PC-3 (cell line): ENCODE measurements at regions of chr12 and their contacts with region 1.

Region 1: DNA sequence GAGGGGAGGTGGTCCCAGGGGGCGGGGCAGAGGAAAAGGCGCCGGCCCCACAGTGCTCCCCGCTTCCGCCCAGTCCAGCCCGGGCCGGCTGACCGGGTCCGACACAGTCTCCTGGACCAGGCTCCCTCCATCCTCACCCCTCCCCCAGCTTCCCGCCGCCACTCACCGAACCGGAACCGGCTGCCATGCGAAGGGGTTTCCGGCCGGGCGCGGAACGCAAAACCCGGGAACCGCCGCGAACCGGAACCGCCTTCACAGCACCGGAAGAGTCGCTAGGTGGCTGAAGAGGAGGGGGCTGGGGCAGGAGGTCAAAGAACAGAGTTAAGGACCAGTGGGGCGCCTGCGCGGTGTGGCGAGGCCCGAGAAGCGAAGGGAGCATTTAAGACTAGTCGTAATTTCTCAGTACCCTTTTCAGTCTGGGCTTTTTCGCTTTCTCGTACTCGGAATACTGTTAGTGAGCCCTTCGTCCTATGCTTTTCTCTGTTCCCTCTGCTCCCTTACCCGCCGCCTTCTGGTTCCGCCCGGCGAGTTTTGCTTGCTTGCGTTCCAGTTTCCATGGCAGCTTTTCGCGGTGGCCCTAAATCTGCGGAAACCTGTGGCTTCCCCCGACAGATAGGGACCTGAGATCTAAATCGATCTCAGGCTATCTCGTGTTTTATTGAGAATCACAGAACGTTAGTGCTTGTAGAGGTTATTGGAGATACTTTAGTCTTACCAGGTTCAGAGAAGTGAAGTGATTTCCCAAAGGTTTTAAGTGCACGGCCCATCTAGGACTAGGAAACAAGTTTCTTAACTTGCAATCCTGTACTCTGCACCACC is at the start of gene SENP1:
- DNase-seq: peak; percentile 85
- ATAC-seq: peak; percentile 82
- H3K4me3 ChIP-seq: peak within 1 kb of the TSS; percentile 90
- H3K27ac ChIP-seq: peak within 1 kb of the TSS; percentile 96
- H3K4me1 ChIP-seq: peaks cover 43% of the 10 kb centered on the region
- H3K27me3 ChIP-seq: no peaks in the 10 kb centered on the region
- CTCF ChIP-seq: no peak
- total RNA-seq, gene SENP1: 16.9 and 20.9 TPM in 2 replicates

Region 2: GRCh38 chr12:48119078-48119833 is 13.2 kb after region 1 on chr12 and contains the start of gene PFKM:
- CTCF ChIA-PET with region 1: no interaction called
- POLR2A ChIA-PET with region 1: no interaction called
- intact Hi-C with region 1: loop called (anchors 2 kb)
- DNase-seq: peak; percentile 84
- ATAC-seq: peak; percentile 97
- H3K4me3 ChIP-seq: peak within 1 kb of the TSS; percentile 87
- H3K27ac ChIP-seq: no peak within 1 kb of the TSS
- H3K4me1 ChIP-seq: peaks cover 15% of the 10 kb centered on the region
- H3K27me3 ChIP-seq: no peaks in the 10 kb centered on the region
- CTCF ChIP-seq: no peak
- total RNA-seq, gene PFKM: 62.2 and 80.8 TPM in 2 replicates

Region 3: GRCh38 chr12:48157018-48157888 is 51.2 kb after region 1 on chr12 and contains the start of gene ASB8:
- CTCF ChIA-PET with region 1: no interaction called
- POLR2A ChIA-PET with region 1: interaction called, 5 read pairs
- intact Hi-C with region 1: loop called (anchors 2 kb)
- DNase-seq: peak; percentile 98
- ATAC-seq: peak; percentile 95
- H3K4me3 ChIP-seq: peak within 1 kb of the TSS; percentile 88
- H3K27ac ChIP-seq: no peak within 1 kb of the TSS
- H3K4me1 ChIP-seq: peaks cover 14% of the 10 kb centered on the region
- H3K27me3 ChIP-seq: no peaks in the 10 kb centered on the region
- CTCF ChIP-seq: peak; percentile 57
- total RNA-seq, gene ASB8: 18.0 and 34.4 TPM in 2 replicates